SK-N-SH (cell line): ENCODE measurements at regions of chr18 and their contacts with region 1.

Region 1: GRCh38 chr18:67515945-67516538 is 478 bp downstream of the DSEL start:
- DNase-seq: peak; percentile 78
- H3K4me3 ChIP-seq: peak overlapping the region; percentile 84 to 95
- H3K27ac ChIP-seq: peak overlapping the region; percentile 71 to 81
- H3K4me1 ChIP-seq: peaks cover 17 to 22% of the 10 kb centered on the region in 2 experiments; a peak in 3 of 4 replicates
- H3K27me3 ChIP-seq: no peaks in the 10 kb centered on the region
- CTCF ChIP-seq: peak; percentile 80
- EP300 ChIP-seq: no peak
- RAD21 ChIP-seq: peak; percentile 91

Region 2: DNA sequence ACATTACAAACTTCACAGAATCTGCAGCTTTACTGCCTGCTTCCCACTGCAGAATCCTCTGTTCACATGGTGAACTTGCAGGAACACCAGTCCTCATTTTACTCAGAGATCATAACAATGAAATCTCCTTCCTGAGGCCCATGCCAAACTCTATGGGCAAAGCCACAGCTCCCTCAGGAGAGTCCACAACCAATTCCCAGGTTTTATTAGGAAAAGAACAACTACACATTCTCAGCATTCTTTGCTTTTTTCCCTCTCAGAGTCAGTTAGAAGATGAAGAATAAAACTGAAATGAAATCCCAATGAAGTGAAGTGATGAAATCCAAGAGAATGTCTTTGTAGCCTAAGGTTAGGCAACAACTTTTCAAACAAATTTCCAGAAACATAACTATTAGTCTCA is 233.2 kb before region 1 on chr18:
- CTCF ChIA-PET with region 1: interaction called, 12 read pairs
- POLR2A ChIA-PET with region 1: no interaction called
- DNase-seq: no peak
- H3K4me3 ChIP-seq: no peak overlapping the region
- H3K27ac ChIP-seq: no peak overlapping the region
- H3K4me1 ChIP-seq: peaks cover 0 to 8% of the 10 kb centered on the region in 2 experiments; a peak in 2 of 4 replicates
- H3K27me3 ChIP-seq: no peaks in the 10 kb centered on the region
- CTCF ChIP-seq: no peak
- EP300 ChIP-seq: no peak
- RAD21 ChIP-seq: no peak

Region 3: DNA sequence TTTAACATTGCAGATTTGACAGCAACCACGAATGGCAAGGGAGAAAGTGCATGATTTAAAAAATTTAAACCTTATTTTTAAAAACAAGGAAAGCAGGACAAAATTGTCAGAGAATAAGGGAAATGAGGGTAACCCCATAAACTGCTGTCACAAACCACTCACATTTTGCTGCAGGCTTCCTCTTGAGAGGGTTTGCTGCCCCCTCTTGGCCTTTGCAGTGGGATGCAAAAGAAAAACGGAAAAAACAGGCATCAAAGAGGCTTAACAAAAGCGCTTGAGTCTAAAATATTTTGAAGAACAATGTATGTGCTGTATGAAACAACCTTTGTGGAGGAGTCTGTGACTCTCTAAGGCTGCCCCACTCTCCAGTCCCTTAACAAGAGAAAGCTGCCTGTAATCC is 1107.3 kb after region 1 on chr18:
- CTCF ChIA-PET with region 1: interaction called, 23 read pairs
- POLR2A ChIA-PET with region 1: no interaction called
- DNase-seq: peak; percentile 72
- H3K4me3 ChIP-seq: peak overlapping the region in 1 of 2 experiments; percentile 38; a peak in 1 of 4 replicates
- H3K27ac ChIP-seq: no peak overlapping the region
- H3K4me1 ChIP-seq: no peaks in the 10 kb centered on the region; a peak in 1 of 4 replicates
- H3K27me3 ChIP-seq: no peaks in the 10 kb centered on the region
- CTCF ChIP-seq: peak; percentile 96
- EP300 ChIP-seq: no peak
- RAD21 ChIP-seq: peak; percentile 96